ENCODE measurements at regions of chr5 and their contacts with region 1.

Region 1: DNA sequence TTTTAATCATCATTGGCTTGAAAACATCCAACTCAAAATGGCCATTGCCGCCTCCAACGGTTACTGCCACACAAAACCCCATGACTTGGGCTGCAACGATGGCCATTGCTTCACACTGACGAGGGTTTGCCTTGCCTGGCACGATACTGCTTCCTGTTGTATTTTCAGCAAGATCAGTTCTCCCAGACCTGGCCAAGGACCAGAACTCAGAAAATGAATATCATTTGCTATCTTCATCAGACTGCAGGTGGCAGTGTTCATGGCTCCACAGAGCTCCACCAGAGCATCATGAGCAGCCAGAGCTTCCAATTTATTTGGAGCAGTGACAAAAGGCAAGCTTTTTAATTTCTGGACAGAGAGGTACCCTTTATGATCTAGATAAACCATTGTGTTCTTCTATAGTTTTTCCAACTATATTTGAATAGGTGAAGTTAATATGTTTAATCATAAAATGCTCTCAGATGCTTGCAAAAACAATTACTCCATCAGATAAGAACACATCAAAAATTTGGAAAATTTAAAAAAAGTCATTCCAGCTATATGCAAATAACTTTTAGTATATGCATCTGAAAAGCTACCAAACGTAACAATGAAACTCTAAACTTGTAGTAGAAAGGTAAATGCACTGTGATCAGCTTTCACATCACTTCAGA is 10.4 kb downstream of the AMACR start:
- DNase-seq: peak; percentile 88
- ATAC-seq: peak; percentile 49
- H3K4me3 ChIP-seq: no peak overlapping the region
- H3K27ac ChIP-seq: no peak overlapping the region
- H3K4me1 ChIP-seq: peaks cover 21% of the 10 kb centered on the region
- H3K27me3 ChIP-seq: no peaks in the 10 kb centered on the region
- CTCF ChIP-seq: peak; percentile 87

Region 2: DNA sequence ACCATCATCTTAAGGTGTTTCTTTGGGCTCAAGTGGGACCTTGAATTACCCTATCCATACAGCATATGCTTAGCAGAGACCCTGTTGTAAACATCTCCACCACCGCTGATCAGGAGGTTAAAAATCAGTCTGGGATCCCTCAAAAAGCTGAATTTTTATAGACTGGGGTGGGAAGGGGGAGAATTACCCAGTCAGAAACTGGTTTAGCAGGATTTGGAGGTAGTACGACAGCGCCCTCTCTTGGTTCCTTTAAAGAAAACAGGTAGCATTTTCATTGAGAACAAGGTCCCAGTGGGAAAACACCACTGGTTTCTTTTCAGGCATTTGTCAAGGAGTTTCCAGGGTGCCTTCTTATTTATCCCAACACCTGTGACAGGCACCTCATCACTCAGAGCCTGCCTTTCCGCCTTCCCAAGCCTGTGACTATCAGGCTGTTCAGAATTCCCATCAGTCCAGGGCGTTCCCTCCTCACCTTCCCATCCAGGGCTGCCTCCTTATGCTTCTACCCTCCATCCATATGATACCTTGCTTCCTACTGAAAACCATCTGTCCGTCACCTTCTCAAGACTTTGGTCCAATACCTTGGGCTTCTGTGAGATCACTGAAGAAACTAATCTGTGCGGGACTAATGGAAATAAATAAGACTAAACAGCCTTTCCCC is 454.8 kb after region 1 on chr5:
- CTCF ChIA-PET with region 1: interaction called, 5 read pairs
- POLR2A ChIA-PET with region 1: no interaction called
- intact Hi-C with region 1: loop called (anchors 1 kb)
- DNase-seq: peak; percentile 76
- ATAC-seq: peak; percentile 56
- H3K4me3 ChIP-seq: no peak overlapping the region
- H3K27ac ChIP-seq: no peak overlapping the region
- H3K4me1 ChIP-seq: peaks cover 17% of the 10 kb centered on the region
- H3K27me3 ChIP-seq: no peaks in the 10 kb centered on the region
- CTCF ChIP-seq: peak; percentile 92

Region 3: GRCh38 chr5:34464830-34465229 is 467.4 kb after region 1 on chr5:
- CTCF ChIA-PET with region 1: interaction called, 4 read pairs
- POLR2A ChIA-PET with region 1: no interaction called
- intact Hi-C with region 1: loop called (anchors 2 kb)
- DNase-seq: no peak
- ATAC-seq: no peak
- H3K4me3 ChIP-seq: no peak overlapping the region
- H3K27ac ChIP-seq: no peak overlapping the region
- H3K4me1 ChIP-seq: peaks cover 15% of the 10 kb centered on the region
- H3K27me3 ChIP-seq: no peaks in the 10 kb centered on the region
- CTCF ChIP-seq: no peak

Measured in PC-3 (cell line).